Mammary epithelial cell (primary cell): ENCODE measurements at regions of chr4 and their contacts with region 1.

Region 1: DNA sequence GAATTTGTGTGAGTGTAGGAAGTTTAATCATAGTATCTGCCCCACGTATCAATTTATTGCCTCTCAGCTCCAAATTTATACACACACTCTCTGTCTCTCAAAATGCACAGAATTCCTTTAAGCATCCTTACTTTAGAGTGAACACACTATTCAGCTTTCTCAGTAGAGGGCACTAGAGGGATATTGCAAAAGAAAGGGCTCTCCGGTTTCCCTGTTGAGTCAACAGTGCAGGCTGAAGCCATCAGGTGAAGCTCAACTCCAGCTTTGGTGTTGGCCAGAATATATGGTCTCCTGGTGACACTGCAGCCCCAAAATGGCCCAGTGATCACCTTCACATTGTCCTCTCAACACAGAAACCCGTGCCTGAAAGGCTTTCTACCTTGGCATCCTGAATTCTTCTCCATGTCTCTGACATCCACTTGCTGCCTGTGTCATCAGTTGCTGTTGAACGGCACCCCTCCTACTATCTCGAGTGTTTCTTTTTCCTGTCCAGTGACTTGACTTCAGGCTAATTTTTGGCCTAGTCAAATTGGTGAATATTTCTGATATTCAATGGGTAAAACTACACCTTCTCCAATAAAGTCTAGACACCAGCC is 670.5 kb downstream of the GABRG1 start:
- DNase-seq: peak; percentile 54
- H3K4me3 ChIP-seq: no peak overlapping the region
- H3K27ac ChIP-seq: no peak overlapping the region
- H3K4me1 ChIP-seq: no peaks in the 10 kb centered on the region
- H3K27me3 ChIP-seq: no peaks in the 10 kb centered on the region
- CTCF ChIP-seq: peak; percentile 60 to 73

Region 2: DNA sequence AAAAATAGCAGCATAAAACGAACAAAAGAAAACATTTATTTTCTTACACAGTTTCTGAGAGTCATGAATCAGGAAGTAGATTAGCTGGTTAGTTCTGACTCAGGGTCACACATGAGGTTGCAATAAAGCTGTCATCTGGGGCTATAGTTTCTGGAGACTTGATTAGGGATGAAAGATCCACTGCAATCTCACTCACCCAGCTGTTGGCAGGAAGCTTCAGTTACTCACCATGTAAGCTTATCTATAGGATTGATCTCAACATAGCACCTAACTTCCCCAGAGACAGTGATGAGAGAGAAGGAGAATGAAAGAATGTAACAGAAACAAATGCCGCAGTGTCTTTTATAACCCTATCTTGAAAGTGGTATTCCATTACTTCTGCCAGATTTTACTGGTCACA is 235.0 kb after region 1 on chr4:
- CTCF ChIA-PET with region 1: no interaction called
- dilution Hi-C with region 1: no loop called
- in situ Hi-C with region 1: no loop called
- intact Hi-C with region 1: no loop called
- DNase-seq: peak; percentile 49
- H3K4me3 ChIP-seq: no peak overlapping the region
- H3K27ac ChIP-seq: no peak overlapping the region
- H3K4me1 ChIP-seq: no peaks in the 10 kb centered on the region
- H3K27me3 ChIP-seq: no peaks in the 10 kb centered on the region
- CTCF ChIP-seq: no peak

Region 3: GRCh38 chr4:45741897-45742296 is 288.5 kb after region 1 on chr4:
- CTCF ChIA-PET with region 1: interaction called, 8 read pairs
- dilution Hi-C with region 1: no loop called
- in situ Hi-C with region 1: no loop called
- intact Hi-C with region 1: loop called (anchors 10 kb)
- DNase-seq: peak; percentile 5
- H3K4me3 ChIP-seq: no peak overlapping the region
- H3K27ac ChIP-seq: no peak overlapping the region
- H3K4me1 ChIP-seq: no peaks in the 10 kb centered on the region
- H3K27me3 ChIP-seq: no peaks in the 10 kb centered on the region
- CTCF ChIP-seq: peak in 1 of 2 donors; percentile 18

Region 4: DNA sequence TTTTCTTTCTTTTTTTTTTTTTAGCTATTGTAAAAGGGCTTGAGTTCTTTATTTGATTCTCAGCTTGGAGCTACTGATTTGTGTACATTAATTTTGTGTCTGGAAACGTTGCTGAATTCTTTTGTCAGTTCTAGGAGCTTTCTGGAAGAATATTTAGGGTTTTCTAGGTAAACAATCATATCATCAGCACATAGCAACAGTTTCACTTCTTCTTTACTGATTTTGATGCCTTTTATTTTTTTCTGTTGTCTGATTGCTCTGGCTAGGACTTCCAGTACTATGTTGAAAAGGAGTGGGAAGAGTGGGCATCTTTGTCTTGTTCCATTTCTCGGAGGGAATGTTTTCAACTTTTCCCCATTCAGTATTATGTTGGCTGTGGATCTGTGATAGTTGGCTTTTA is 378.3 kb after region 1 on chr4:
- CTCF ChIA-PET with region 1: no interaction called
- dilution Hi-C with region 1: no loop called
- in situ Hi-C with region 1: no loop called
- intact Hi-C with region 1: loop called (anchors 10 kb)
- DNase-seq: no peak
- H3K4me3 ChIP-seq: no peak overlapping the region
- H3K27ac ChIP-seq: no peak overlapping the region
- H3K4me1 ChIP-seq: no peaks in the 10 kb centered on the region
- H3K27me3 ChIP-seq: no peaks in the 10 kb centered on the region
- CTCF ChIP-seq: no peak

Region 5: DNA sequence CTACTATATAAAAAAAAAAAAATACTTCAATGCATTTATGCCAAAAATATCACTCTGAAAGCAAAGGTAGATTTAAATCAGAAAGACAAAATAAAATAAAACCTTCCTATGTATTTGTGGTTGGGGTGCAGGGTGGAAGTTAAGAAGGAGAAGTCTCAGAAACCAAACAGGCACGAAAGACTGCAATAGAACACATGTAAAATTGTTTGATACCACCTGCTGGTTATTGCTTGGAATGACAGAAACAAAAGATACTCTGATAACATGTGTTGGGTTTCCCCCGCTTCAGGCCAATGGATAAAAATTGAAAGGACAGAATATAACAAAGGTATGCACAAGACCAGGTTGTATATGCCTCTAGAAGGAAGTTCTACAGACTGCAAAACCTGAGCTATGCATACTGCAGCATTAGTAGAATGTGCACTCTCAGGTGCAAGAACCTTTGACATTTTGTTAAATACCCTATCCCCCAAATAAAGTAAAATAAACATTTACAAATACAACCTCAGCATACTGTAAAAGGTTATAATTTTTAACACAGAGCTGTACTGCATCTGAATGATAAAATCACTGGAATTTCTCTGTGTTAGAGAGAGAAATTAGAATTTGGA is 817.7 kb after region 1 on chr4:
- CTCF ChIA-PET with region 1: no interaction called
- dilution Hi-C with region 1: no loop called
- in situ Hi-C with region 1: no loop called
- intact Hi-C with region 1: loop called (anchors 1 kb)
- DNase-seq: peak; percentile 21
- H3K4me3 ChIP-seq: no peak overlapping the region
- H3K27ac ChIP-seq: no peak overlapping the region
- H3K4me1 ChIP-seq: no peaks in the 10 kb centered on the region
- H3K27me3 ChIP-seq: no peaks in the 10 kb centered on the region
- CTCF ChIP-seq: peak; percentile 46 to 58